PC-3 (cell line): ENCODE measurements at regions of chr15 and their contacts with region 1.

Region 1: GRCh38 chr15:89472785-89473256 is 23.6 kb downstream of the RHCG start:
- DNase-seq: peak; percentile 75
- ATAC-seq: peak; percentile 82
- H3K4me3 ChIP-seq: no peak overlapping the region
- H3K27ac ChIP-seq: no peak overlapping the region
- H3K4me1 ChIP-seq: peaks cover 12% of the 10 kb centered on the region
- H3K27me3 ChIP-seq: no peaks in the 10 kb centered on the region
- CTCF ChIP-seq: peak; percentile 93

Region 2: GRCh38 chr15:89416141-89416853 is 56.5 kb before region 1 on chr15:
- CTCF ChIA-PET with region 1: interaction called, 3 read pairs
- POLR2A ChIA-PET with region 1: no interaction called
- intact Hi-C with region 1: loop called (anchors 1 kb)
- DNase-seq: peak; percentile 77
- ATAC-seq: peak; percentile 86
- H3K4me3 ChIP-seq: no peak overlapping the region
- H3K27ac ChIP-seq: no peak overlapping the region
- H3K4me1 ChIP-seq: no peaks in the 10 kb centered on the region; the same call in 1 of the 2 replicates
- H3K27me3 ChIP-seq: peaks cover 19% of the 10 kb centered on the region
- CTCF ChIP-seq: peak; percentile 96

Region 3: GRCh38 chr15:89430530-89431341 is 42.1 kb before region 1 on chr15:
- CTCF ChIA-PET with region 1: no interaction called
- POLR2A ChIA-PET with region 1: no interaction called
- intact Hi-C with region 1: loop called (anchors 5 kb)
- DNase-seq: peak; percentile 88
- ATAC-seq: peak; percentile 95
- H3K4me3 ChIP-seq: peak overlapping the region; percentile 81
- H3K27ac ChIP-seq: no peak overlapping the region
- H3K4me1 ChIP-seq: peaks cover 13% of the 10 kb centered on the region
- H3K27me3 ChIP-seq: no peaks in the 10 kb centered on the region
- CTCF ChIP-seq: peak; percentile 92

Region 4: GRCh38 chr15:89442671-89443307 is 30.0 kb before region 1 on chr15:
- CTCF ChIA-PET with region 1: interaction called, 4 read pairs
- POLR2A ChIA-PET with region 1: interaction called, 5 read pairs
- intact Hi-C with region 1: loop called (anchors 1 kb)
- DNase-seq: peak; percentile 77
- ATAC-seq: peak; percentile 74
- H3K4me3 ChIP-seq: no peak overlapping the region
- H3K27ac ChIP-seq: no peak overlapping the region
- H3K4me1 ChIP-seq: no peaks in the 10 kb centered on the region
- H3K27me3 ChIP-seq: no peaks in the 10 kb centered on the region
- CTCF ChIP-seq: peak; percentile 93